Esophagus muscularis mucosa (tissue), 4 donors: ENCODE measurements at regions of chr2 and their contacts with region 1.

Region 1: DNA sequence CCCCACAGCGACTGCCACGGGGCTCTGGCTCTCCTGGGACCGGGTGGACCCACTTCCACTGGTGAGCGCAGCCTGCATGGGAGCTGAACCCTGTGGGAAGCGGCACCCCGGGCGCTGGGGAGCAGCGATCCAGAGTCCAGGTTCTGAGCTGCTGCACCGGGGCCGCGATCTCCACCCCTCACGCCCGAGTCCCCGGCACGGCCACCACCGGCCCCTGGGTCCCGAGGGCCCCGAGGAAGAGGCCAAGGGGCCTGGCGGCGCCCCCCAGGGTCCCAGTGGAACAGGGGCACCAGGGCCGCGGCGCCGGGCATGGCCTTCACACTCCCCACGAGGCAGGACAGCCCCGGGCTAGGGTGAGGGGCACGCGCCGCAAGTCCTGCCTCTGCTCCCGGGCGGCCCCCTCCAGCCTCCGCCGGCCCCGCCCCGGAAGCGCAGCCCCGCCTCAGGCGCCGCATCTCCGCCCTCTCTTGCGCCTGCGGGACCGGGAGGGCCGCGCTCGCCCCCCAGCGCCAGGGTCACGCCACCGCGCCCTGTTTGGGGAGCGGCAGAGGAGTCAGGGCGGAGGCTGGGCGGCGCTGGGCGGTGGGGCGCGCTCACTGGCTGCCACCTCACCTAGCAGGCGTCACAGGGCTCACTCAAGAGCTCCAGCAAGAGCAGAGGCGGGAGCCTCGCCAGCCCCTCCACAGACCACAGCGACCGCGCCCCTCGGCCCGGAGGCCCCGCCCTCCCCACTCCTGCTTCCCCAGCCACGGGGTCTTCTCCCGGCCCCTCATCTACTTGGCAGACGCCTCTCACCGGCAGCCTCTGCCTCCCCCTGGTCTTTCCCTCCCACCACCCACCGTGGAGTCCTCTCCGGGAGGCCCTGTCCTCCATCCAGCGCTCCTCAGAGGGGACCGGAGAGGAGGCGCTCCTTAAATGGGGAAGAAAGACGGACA is 26.8 kb downstream of the THAP4 start:
- DNase-seq: no peak
- H3K4me3 ChIP-seq: peak overlapping the region; percentile 68 to 78 (median 72)
- H3K27ac ChIP-seq: peak overlapping the region; percentile 85 to 87 (median 86)
- H3K4me1 ChIP-seq: peaks cover 9 to 44% (median 27%) of the 10 kb centered on the region in 4 donors
- H3K27me3 ChIP-seq: no peaks in the 10 kb centered on the region
- CTCF ChIP-seq: peak; percentile 63 to 81 (median 80)
- EP300 ChIP-seq: no peak
- POLR2A ChIP-seq: no peak

Region 2: GRCh38 chr2:241508240-241509154 is 101.6 kb before region 1 on chr2 and contains the start of gene STK25:
- intact Hi-C with region 1: loop called (anchors 5 kb)
- DNase-seq: peak; percentile 99
- H3K4me3 ChIP-seq: peak within 1 kb of the TSS; percentile 82 to 100 (median 98)
- H3K27ac ChIP-seq: peak within 1 kb of the TSS; percentile 88 to 95 (median 92)
- H3K4me1 ChIP-seq: peaks cover 31 to 51% (median 43%) of the 10 kb centered on the region in 4 donors
- H3K27me3 ChIP-seq: no peaks in the 10 kb centered on the region
- CTCF ChIP-seq: no peak
- EP300 ChIP-seq: no peak
- POLR2A ChIP-seq: no peak
- total RNA-seq, gene STK25: 127 to 220 (median 153) TPM